AG04449 (cell line): ENCODE measurements at regions of chr5 and their contacts with region 1.

Region 1: GRCh38 chr5:55691265-55692105 is 20.6 kb downstream of the SLC38A9 start:
- DNase-seq: no peak
- H3K4me3 ChIP-seq: no peak overlapping the region
- CTCF ChIP-seq: peak; percentile 25

Region 2: DNA sequence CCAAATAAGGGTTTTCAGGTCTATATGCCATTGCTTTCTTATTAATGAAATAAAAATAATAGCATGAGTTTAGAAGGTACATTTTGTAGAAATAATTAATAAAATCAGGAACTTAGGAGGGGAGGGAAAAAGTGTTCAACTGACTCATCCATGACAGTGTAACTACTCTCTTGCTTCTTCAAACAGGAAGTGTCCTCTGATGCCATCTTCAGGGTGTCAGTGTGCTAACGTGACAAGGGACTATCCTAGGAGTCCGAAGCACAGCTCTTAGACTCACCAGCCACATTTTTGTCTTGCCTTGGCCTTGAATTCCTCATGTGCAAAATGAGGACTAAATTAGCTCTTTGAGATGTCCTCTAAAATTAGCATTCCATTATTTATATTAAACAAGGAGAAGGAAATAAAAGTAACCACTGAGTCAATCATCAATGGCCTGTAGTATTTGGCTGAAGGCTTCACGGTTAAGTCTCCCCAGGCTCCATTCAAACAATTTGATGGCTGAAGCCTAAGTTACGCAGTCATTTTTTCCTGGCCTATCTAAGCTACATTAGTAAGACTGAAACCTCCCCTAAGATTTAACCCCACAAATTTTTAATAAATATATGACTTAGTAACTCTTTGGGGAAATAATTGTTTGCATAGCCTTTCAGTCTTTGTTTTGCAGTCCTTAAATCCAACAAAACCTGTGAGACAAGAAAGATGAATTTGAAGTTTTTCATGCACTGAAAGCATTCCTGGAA is 1532.2 kb before region 1 on chr5:
- CTCF ChIA-PET with region 1: no interaction called
- POLR2A ChIA-PET with region 1: no interaction called
- DNase-seq: no peak
- H3K4me3 ChIP-seq: no peak overlapping the region
- CTCF ChIP-seq: no peak

Region 3: DNA sequence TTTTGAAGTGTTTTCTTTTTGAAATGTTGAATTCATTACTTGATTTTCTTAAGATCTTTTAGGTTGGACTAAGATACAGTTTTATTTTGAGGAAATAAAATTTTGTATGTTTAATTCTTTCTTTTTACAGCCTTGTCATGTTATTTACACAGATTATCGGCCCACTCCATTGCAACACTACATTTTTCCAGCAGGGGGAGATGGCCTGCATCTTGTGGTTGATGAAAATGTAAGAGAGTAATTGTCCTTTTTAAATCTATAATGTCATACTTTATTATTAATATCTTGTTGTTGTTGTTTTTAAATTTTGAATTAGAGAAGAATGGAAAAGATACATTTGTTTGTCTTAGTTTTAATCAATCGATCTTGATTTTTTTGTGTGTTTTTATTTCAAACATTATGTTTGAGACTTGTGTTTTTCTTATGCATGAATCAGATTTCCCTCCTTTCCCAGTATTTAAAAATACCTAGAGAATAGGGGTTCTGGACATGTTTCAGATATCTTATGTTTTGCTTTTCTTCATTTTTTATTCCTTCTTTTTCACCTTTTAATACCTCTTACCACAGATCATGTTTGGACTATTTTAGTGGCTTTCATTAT is 347.0 kb before region 1 on chr5:
- CTCF ChIA-PET with region 1: interaction called, 46 read pairs
- POLR2A ChIA-PET with region 1: no interaction called
- DNase-seq: no peak
- H3K4me3 ChIP-seq: no peak overlapping the region
- CTCF ChIP-seq: peak; percentile 78

Region 4: GRCh38 chr5:55407059-55407684 is 284.3 kb before region 1 on chr5:
- CTCF ChIA-PET with region 1: interaction called, 74 read pairs
- POLR2A ChIA-PET with region 1: no interaction called
- DNase-seq: no peak
- H3K4me3 ChIP-seq: no peak overlapping the region
- CTCF ChIP-seq: peak; percentile 66

Region 5: GRCh38 chr5:55439008-55439407 is 252.5 kb before region 1 on chr5:
- CTCF ChIA-PET with region 1: interaction called, 14 read pairs
- POLR2A ChIA-PET with region 1: no interaction called
- DNase-seq: no peak
- H3K4me3 ChIP-seq: no peak overlapping the region
- CTCF ChIP-seq: no peak

Region 6: DNA sequence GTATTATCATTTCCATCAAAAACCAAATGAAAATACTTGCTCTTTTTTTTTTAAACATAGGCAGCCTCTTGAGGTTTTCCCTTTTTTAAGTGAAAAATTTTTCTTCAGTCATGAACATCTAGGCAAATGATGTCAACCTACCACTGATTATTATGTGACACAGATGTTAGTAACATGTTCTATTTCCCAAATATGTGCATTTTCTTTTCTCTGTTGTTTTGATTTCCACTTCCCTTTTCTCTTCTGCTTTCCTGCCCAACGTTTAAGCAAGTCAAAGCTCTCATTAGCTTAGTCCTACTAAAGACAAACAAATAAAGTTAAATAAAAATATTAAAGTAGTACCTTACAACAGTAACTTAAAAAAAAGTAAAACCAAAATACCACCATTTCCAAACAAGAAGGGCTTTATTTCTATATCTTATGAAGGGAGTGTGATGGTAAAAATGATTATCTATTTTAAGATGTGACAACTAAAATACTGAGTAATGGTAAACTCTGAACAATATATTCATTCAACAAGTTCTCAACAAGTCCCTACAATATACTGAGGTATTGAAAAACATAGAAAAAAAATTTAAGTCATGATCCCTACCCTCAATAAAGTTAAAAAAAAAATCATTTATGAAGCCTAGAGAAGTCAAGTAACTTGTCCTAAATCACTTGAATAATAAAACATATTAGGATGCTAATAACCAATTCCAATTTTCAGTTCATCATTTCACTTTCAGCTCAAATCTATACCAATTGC is 11.3 kb after region 1 on chr5:
- CTCF ChIA-PET with region 1: interaction called, 19 read pairs
- POLR2A ChIA-PET with region 1: no interaction called
- DNase-seq: no peak
- H3K4me3 ChIP-seq: no peak overlapping the region
- CTCF ChIP-seq: no peak

Region 7: DNA sequence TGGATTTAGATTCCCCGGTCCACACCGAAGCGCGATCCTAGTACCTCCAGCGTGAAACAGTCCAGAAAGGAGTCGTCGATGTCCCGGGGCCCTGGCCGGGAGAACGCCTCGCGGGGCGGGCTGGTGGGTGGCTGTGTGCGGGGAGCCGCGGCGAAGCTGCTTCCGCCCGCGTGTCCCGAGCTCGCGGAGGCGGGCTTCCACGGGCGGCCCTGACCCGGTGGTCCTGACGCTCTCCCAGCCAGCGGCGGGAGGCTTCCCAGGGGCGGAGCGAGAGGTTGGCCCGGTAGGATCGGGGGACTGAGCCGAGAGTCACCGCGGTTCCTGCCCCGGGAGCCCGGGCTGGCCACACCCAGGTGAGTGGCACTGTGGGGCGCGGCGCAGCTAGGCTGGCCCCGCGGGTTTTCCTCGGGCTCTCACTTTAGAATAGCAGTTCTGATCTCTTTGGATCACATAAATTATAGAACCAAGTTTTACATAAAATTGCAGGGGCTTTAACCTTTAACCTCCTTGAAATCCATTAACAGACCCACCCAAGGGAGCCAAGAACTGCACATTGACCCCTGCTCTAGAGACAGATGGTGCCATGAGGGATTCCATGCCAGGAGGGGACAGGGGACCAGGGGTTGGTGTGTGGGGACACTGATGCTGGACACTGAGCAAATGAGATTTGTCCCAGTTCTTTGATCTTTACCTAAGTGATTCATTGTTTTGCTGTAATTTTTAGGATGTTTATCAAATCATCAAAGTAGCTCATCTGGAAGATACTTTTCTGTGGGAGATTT is 130.4 kb after region 1 on chr5:
- CTCF ChIA-PET with region 1: no interaction called
- POLR2A ChIA-PET with region 1: no interaction called
- DNase-seq: no peak
- H3K4me3 ChIP-seq: peak overlapping the region; percentile 45
- CTCF ChIP-seq: no peak

Region 8: GRCh38 chr5:56019306-56020272 is 328.1 kb after region 1 on chr5:
- CTCF ChIA-PET with region 1: no interaction called
- POLR2A ChIA-PET with region 1: no interaction called
- DNase-seq: no peak
- H3K4me3 ChIP-seq: no peak overlapping the region
- CTCF ChIP-seq: no peak

Region 9: DNA sequence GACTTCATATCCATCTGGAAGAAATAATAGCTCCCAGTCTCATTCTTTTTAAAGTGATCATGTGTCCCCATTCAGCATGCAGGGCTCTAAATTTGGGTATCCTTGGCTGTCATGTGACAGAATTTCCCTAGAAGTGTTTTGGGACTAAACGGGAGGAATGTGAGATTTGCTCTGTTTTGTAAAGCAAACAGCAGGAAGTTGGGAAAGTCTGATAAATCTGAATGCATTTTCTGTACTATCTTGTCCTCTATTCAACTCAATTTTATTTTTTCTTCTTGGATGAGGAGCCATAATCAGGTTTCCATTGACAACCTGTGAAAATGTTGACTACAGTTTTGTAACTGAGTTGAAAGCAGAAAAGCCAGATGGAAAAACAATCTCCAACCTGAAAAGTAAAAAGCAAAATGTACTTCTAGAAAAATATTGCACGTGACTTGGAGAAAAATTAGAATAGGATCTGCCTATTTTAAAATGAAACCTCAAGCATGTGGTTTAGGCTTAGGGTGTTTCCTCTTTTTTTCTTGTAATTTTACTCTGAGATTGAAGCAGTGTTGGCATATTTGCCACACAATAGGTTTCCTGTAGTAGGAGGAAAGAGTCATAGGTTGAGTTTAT is 379.5 kb after region 1 on chr5:
- CTCF ChIA-PET with region 1: no interaction called
- POLR2A ChIA-PET with region 1: no interaction called
- DNase-seq: no peak
- H3K4me3 ChIP-seq: no peak overlapping the region
- CTCF ChIP-seq: no peak